ENCODE measurements at regions of chr6 and their contacts with region 1.

Region 1: DNA sequence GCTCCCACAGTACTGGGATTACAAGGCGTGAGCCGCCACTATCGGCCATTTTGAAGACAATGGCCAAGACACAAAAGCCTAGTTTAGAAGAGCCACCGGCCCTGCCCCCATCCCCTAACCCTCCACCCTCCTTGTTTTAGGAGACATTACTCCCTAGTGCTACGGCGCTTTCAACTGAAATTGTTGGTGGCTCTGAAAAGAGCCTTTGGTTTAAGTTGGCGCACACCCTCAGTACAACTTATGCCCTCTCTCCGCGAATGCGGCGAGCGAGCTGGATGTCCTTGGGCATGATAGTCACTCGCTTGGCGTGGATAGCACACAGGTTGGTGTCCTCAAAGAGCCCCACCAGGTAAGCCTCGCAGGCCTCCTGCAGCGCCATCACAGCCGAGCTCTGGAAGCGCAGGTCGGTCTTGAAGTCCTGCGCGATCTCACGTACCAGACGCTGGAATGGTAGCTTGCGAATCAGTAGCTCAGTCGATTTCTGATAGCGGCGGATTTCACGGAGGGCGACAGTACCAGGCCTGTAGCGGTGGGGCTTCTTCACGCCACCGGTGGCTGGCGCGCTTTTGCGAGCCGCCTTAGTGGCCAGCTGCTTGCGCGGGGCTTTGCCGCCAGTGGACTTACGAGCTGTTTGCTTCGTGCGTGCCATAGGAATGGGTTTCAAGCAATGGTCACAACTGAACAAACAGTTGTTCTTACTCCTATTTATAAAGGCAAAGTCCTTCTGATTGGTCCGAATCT is 114.9 kb upstream of the BTN3A2 start:
- DNase-seq: peak; percentile 59 to 91 (median 79)
- ATAC-seq: peak; percentile 77
- H3K4me3 ChIP-seq: peak overlapping the region; percentile 74 to 80
- H3K4me3 Mint-ChIP-seq: peak overlapping the region; percentile 90
- H3K27ac ChIP-seq: peak overlapping the region; percentile 73 to 83
- H3K27ac Mint-ChIP-seq: peak overlapping the region; percentile 96
- H3K4me1 ChIP-seq: peaks cover 15% of the 10 kb centered on the region
- H3K4me1 Mint-ChIP-seq: peaks cover 40% of the 10 kb centered on the region
- H3K27me3 ChIP-seq: no peaks in the 10 kb centered on the region
- H3K27me3 Mint-ChIP-seq: no peaks in the 10 kb centered on the region
- CTCF ChIP-seq: peak; percentile 57

Region 2: DNA sequence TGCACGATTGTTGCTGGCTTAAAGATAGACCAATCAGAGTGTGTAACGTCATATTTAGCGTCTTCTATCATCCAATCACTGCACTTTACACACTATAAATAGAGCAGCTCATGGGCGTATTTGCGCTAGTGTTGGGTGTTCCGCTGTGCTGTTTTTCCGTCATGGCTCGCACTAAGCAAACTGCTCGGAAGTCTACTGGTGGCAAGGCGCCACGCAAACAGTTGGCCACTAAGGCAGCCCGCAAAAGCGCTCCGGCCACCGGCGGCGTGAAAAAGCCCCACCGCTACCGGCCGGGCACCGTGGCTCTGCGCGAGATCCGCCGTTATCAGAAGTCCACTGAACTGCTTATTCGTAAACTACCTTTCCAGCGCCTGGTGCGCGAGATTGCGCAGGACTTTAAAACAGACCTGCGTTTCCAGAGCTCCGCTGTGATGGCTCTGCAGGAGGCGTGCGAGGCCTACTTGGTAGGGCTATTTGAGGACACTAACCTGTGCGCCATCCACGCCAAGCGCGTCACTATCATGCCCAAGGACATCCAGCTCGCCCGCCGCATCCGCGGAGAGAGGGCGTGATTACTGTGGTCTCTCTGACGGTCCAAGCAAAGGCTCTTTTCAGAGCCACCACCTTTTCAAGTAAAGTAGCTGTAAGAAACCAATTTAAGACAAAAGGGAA is 229.7 kb before region 1 on chr6:
- CTCF ChIA-PET with region 1: no interaction called
- POLR2A ChIA-PET with region 1: interaction called, 12 read pairs
- intact Hi-C with region 1: no loop called
- DNase-seq: peak; percentile 69 to 95 (median 78)
- ATAC-seq: peak; percentile 47
- H3K4me3 ChIP-seq: peak overlapping the region; percentile 85 to 88
- H3K4me3 Mint-ChIP-seq: peak overlapping the region; percentile 88
- H3K27ac ChIP-seq: peak overlapping the region; percentile 95 to 98
- H3K27ac Mint-ChIP-seq: peak overlapping the region; percentile 99
- H3K4me1 ChIP-seq: peaks cover 10% of the 10 kb centered on the region
- H3K4me1 Mint-ChIP-seq: peaks cover 41% of the 10 kb centered on the region
- H3K27me3 ChIP-seq: no peaks in the 10 kb centered on the region
- H3K27me3 Mint-ChIP-seq: no peaks in the 10 kb centered on the region
- CTCF ChIP-seq: no peak

Region 3: GRCh38 chr6:26065952-26066380 is 184.2 kb before region 1 on chr6:
- CTCF ChIA-PET with region 1: no interaction called
- POLR2A ChIA-PET with region 1: no interaction called
- intact Hi-C with region 1: no loop called
- DNase-seq: peak in 7 of 9 experiments; percentile 32 to 86 (median 58)
- ATAC-seq: peak; percentile 95
- H3K4me3 ChIP-seq: no peak overlapping the region
- H3K4me3 Mint-ChIP-seq: no peak overlapping the region
- H3K27ac ChIP-seq: no peak overlapping the region
- H3K27ac Mint-ChIP-seq: no peak overlapping the region
- H3K4me1 ChIP-seq: peaks cover 6% of the 10 kb centered on the region
- H3K4me1 Mint-ChIP-seq: peaks cover 5% of the 10 kb centered on the region
- H3K27me3 ChIP-seq: no peaks in the 10 kb centered on the region
- H3K27me3 Mint-ChIP-seq: peaks cover 1% of the 10 kb centered on the region
- CTCF ChIP-seq: peak; percentile 95

Region 4: GRCh38 chr6:26183581-26184366 is 66.4 kb before region 1 on chr6:
- CTCF ChIA-PET with region 1: interaction called, 14 read pairs
- POLR2A ChIA-PET with region 1: interaction called, 23 read pairs
- intact Hi-C with region 1: no loop called
- DNase-seq: peak in 7 of 9 experiments; percentile 33 to 90 (median 59)
- ATAC-seq: peak; percentile 88
- H3K4me3 ChIP-seq: peak overlapping the region; percentile 60 to 71
- H3K4me3 Mint-ChIP-seq: peak overlapping the region; percentile 100
- H3K27ac ChIP-seq: peak overlapping the region; percentile 61 to 76
- H3K27ac Mint-ChIP-seq: peak overlapping the region; percentile 99
- H3K4me1 ChIP-seq: peaks cover 20% of the 10 kb centered on the region
- H3K4me1 Mint-ChIP-seq: peaks cover 42% of the 10 kb centered on the region
- H3K27me3 ChIP-seq: no peaks in the 10 kb centered on the region
- H3K27me3 Mint-ChIP-seq: no peaks in the 10 kb centered on the region
- CTCF ChIP-seq: no peak

Region 5: GRCh38 chr6:26223650-26224546 is 26.2 kb before region 1 on chr6:
- CTCF ChIA-PET with region 1: interaction called, 5 read pairs
- POLR2A ChIA-PET with region 1: interaction called, 57 read pairs
- intact Hi-C with region 1: loop called (anchors 1 to 2 kb)
- DNase-seq: peak in 8 of 9 experiments; percentile 42 to 90 (median 72)
- ATAC-seq: peak; percentile 85
- H3K4me3 ChIP-seq: peak overlapping the region; percentile 64 to 72
- H3K4me3 Mint-ChIP-seq: no peak overlapping the region
- H3K27ac ChIP-seq: peak overlapping the region; percentile 76 to 87
- H3K27ac Mint-ChIP-seq: no peak overlapping the region
- H3K4me1 ChIP-seq: peaks cover 20% of the 10 kb centered on the region
- H3K4me1 Mint-ChIP-seq: peaks cover 24% of the 10 kb centered on the region
- H3K27me3 ChIP-seq: no peaks in the 10 kb centered on the region
- H3K27me3 Mint-ChIP-seq: no peaks in the 10 kb centered on the region
- CTCF ChIP-seq: no peak

Region 6: DNA sequence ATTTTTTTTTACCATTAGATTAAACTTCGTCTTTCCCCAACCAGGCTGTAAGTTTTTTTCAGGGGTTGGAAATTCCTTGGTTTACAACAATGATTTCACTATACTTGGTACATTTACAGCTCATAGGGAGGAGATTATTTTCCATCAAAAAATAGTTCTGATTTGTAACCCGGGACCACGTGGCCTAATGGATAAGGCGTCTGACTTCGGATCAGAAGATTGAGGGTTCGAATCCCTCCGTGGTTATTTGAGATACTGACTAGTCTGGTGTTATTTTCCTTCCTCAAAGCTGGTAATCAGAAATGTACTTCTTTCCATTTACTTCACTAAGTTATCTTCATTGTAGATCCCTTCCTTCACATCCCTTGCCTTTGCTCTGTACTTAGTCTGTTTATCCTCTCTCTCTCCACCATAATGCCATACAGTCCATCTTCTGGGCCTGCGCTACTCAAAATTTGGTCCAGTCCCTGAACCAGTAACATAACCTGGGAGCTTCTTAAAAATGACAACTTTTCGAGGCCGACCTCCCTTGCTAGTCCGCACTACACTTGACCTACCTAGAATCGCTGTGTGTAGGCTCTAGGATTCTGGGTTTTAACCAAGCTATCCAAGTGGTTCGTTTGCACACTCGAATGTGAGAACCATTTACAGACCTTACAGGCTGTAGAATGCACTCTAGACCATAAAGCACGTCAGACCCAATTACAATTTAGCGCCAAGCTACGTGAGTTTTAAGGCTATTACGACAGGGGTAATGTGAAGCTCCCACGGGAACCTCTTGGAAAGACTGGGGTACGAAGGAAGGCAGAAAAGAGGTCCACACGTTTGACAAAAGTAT is 72.7 kb after region 1 on chr6:
- CTCF ChIA-PET with region 1: interaction called, 3 read pairs
- POLR2A ChIA-PET with region 1: interaction called, 15 read pairs
- intact Hi-C with region 1: loop called in 1 of 2 experiments (anchors 2 kb)
- DNase-seq: peak in 8 of 9 experiments; percentile 32 to 86 (median 58)
- ATAC-seq: peak; percentile 65
- H3K4me3 ChIP-seq: peak overlapping the region; percentile 55 to 64
- H3K4me3 Mint-ChIP-seq: peak overlapping the region; percentile 88
- H3K27ac ChIP-seq: no peak overlapping the region
- H3K27ac Mint-ChIP-seq: peak overlapping the region; percentile 90
- H3K4me1 ChIP-seq: peaks cover 5% of the 10 kb centered on the region
- H3K4me1 Mint-ChIP-seq: peaks cover 24% of the 10 kb centered on the region
- H3K27me3 ChIP-seq: peaks cover 0 to 2% of the 10 kb centered on the region in 2 experiments
- H3K27me3 Mint-ChIP-seq: peaks cover 15% of the 10 kb centered on the region
- CTCF ChIP-seq: no peak

Measured in CD8-positive, alpha-beta T cell (primary cell).